ENCODE measurements at regions of chr10 and their contacts with region 1.

Region 1: DNA sequence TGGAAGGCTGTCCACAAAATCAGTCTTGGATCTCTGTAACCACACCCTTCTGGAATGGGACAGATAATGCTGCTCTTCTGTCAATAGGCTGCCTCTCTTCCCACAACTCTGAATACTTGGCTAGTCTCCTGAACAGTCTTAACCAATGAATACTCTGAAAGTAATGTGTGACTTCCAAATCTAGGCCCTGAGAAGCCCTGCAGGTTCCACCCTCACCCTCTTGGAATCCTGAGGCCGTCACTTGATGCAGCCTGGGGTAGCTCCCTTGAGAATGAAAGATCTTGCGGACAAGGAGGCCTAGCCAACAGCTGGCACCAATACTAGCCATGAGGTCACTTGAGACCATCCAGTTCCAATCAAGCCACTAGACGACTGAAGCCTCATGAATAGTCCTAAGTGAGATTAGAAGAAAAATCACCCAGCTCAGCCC is 109.2 kb downstream of the ARHGAP12 start:
- DNase-seq: no peak
- ATAC-seq: peak; percentile 16

Region 2: GRCh38 chr10:30722956-30723620 is 1096.3 kb before region 1 on chr10:
- intact Hi-C with region 1: loop called in 1 of 2 experiments (anchors 10 kb)
- DNase-seq: no peak
- ATAC-seq: no peak

Region 3: DNA sequence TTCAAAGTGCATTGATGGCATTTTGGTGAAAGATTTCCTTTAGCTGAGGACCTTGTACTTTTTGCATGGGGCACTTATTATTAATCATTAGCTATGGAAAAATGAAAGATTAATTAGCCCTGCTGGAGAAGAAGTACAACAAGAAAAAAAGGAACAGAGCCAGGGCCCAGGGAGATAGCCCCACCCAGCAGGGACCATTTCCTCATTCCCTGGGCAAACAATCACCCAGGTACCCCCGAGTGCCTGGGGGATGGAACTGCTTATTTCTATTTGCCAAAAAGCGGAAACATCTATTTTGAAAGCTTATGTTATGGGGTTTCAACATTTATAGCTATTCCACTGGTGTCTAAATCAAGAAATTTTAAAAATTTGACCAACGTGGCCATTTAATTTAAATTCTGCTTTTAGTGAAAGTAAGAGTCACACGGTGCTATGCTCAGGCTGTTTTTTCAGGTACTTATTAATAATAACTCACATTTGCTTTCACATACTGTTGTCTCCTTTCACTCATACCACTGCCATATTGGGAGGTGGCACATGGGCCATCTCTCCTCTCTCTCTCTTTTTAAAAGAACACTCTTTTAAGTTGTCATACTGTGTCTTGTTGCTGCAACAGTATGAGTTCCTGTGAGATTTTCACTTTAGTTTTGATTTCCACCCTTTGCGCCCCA is 380.5 kb after region 1 on chr10:
- intact Hi-C with region 1: no loop called
- DNase-seq: no peak
- ATAC-seq: no peak